ENCODE measurements at regions of chr6 and their contacts with region 1.

Region 1: DNA sequence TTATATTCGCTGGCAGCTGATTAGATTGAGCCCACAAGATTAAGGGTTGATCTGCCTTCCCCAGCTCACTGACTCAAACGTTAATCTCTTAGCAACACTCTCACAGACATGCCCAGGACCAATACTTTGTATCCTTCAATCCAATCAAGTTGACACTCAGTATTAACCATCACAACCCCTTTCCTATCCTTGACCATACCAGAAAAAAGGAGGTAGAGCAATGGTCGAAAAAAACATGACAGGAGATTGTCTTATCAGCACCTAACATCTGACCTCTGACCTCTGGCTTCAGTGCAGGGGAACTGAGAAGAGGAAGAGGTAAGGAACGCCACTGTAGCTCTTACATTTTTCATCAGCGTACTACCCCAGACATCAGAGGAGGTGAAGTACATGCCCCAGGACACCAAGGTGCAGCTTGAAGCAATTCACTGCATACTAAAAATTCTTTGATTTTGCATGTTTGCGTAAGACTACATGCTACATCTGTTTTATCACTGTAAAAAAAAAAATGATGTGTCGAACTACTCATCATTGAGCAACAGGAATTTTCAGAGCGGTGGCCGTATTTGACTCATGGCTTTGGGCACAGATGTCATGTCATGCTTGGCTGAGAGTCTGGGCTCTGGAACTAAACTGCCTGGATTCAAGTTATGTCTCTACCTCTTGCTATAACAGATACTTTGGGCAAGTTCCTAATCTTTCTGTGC is 188.0 kb upstream of the TAB2 start:
- DNase-seq: no peak

Region 2: DNA sequence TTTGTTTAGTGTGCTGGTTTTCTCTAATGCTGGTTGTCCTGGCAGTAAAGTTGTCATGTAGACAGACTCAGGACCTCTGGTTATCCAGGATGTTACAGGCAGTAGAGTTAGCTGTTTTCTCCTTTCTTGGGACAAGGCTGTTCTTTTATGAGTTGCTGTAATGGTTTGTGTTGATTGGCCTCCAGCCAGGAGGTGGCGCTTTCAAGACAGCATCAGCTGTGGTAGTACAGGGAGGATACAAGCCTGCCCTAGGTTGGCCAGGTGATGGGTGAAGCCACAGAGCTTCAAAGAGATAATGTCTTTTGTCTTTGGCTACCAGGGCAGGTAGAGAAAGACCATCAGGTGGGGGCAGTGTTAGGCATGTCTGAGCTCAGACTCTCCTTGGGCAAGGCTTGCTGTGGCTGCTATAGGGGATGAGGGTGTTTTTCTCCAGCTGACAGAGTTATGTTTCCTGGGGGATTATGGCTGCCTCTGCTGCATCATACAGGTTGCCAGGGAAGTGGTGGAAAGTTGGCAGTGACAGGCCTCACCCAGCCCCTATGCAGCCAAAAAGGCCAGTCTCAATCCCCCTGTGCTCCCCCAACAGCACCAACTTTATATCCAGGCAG is 60.8 kb after region 1 on chr6:
- intact Hi-C with region 1: loop called (anchors 10 kb)
- DNase-seq: no peak